Transverse colon (tissue), 4 donors: ENCODE measurements at regions of chr1 and their contacts with region 1.

Region 1: DNA sequence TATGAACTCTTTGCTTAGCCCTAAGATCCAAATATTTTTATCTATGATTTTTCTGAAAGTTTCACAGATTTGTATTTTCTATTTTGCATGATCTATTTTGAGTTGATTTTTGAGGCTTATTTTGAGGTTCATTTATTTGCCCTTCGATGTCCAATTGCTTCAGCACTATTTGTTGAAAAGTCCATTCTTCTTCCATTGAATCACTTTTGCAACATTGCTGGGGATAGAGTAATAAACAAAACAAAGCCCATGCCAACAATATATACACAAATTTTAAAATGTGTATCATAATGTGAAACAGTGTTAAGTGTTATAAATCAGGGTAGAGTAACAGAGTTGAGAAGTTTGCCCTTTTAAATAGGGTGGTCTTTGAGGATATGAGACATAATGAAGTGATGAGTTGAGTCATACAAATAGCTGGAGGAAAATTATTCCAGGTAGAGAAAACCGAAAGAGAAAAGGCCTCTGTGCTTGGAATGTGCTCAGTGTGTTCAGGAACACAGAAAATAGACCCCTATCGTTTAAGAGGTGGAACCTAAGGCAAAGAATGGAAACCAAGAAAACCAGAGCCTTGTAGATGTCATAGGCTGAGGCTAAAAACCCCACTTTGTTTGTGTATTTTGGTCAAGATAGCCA is 172.7 kb upstream of the NR5A2 start:
- DNase-seq: no peak
- H3K4me3 ChIP-seq: no peak overlapping the region
- H3K27ac ChIP-seq: no peak overlapping the region
- H3K4me1 ChIP-seq: no peaks in the 10 kb centered on the region
- H3K27me3 ChIP-seq: no peaks in the 10 kb centered on the region
- CTCF ChIP-seq: no peak
- EP300 ChIP-seq: no peak
- POLR2A ChIP-seq: no peak

Region 2: GRCh38 chr1:198187973-198188588 is 1666.7 kb before region 1 on chr1:
- in situ Hi-C with region 1: no loop called
- intact Hi-C with region 1: no loop called
- DNase-seq: no peak
- H3K4me3 ChIP-seq: no peak overlapping the region
- H3K27ac ChIP-seq: peak overlapping the region in 1 of 4 donors; percentile 14
- H3K4me1 ChIP-seq: peaks cover 0 to 43% (median 8%) of the 10 kb centered on the region in 4 donors
- H3K27me3 ChIP-seq: no peaks in the 10 kb centered on the region
- CTCF ChIP-seq: no peak
- EP300 ChIP-seq: no peak
- POLR2A ChIP-seq: no peak

Region 3: DNA sequence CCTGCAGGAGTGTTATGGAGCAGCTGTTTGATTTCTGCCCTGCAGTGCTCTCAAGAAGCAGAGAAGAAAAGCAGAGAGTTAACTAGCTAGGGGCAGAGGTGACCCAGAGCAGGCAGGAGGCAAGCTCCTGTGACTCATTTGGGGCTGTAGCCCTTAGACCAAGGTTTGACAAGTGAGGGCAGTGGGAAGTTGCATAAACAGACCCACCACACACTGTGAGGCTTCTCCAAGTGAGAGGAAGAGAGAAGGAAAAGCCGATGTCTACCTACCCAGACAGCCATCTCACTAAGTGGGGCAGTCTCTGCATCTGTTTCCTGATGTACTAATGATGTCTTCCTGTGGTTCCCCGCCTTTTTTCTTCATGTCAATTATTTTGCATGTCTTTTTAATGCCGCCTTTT is 12.8 kb after region 1 on chr1:
- in situ Hi-C with region 1: no loop called
- intact Hi-C with region 1: loop called (anchors 1 kb)
- DNase-seq: no peak
- H3K4me3 ChIP-seq: no peak overlapping the region
- H3K27ac ChIP-seq: no peak overlapping the region
- H3K4me1 ChIP-seq: no peaks in the 10 kb centered on the region
- H3K27me3 ChIP-seq: no peaks in the 10 kb centered on the region
- CTCF ChIP-seq: no peak
- EP300 ChIP-seq: no peak
- POLR2A ChIP-seq: no peak